CD4-positive, alpha-beta T cell (primary cell): ENCODE measurements at regions of chr15 and their contacts with region 1.

Region 1: DNA sequence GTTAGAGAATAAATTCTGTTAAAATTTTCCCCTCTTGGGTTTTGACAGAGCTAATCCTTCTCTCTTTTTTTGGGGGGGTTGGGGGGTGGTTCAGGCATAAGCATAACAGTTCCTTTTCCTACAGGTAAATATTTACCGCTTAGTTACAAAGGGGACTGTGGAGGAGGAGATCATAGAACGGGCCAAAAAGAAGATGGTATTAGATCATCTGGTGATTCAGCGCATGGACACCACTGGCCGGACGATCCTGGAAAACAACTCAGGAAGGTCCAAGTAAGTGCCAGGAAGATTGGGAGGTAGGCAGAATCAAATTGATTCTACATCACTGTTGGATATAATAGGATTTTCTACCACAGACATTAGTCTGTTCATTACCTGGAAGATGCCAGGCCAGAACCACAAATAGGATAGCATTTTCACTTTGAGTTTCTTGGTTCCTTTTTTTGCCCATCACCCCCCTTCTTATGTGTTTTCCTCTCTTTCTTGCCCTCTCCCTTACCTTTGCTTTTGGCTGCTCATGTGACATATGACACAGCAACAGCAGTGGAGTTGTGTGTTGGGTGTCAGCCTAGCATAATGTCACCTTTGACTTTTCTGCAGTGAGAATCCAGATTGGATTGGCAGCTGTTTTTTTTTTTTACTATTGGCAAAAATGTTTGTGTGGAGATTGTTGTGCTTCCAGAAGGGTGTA is 79.0 kb downstream of the CHD2 start:
- DNase-seq: no peak
- ATAC-seq: no peak
- H3K4me3 ChIP-seq: no peak overlapping the region
- H3K4me3 Mint-ChIP-seq: no peak overlapping the region
- H3K27ac ChIP-seq: no peak overlapping the region
- H3K27ac Mint-ChIP-seq: peak overlapping the region; percentile 56
- H3K4me1 ChIP-seq: no peaks in the 10 kb centered on the region
- H3K4me1 Mint-ChIP-seq: peaks cover 30% of the 10 kb centered on the region
- H3K27me3 ChIP-seq: no peaks in the 10 kb centered on the region
- H3K27me3 Mint-ChIP-seq: no peaks in the 10 kb centered on the region
- CTCF ChIP-seq: no peak

Region 2: DNA sequence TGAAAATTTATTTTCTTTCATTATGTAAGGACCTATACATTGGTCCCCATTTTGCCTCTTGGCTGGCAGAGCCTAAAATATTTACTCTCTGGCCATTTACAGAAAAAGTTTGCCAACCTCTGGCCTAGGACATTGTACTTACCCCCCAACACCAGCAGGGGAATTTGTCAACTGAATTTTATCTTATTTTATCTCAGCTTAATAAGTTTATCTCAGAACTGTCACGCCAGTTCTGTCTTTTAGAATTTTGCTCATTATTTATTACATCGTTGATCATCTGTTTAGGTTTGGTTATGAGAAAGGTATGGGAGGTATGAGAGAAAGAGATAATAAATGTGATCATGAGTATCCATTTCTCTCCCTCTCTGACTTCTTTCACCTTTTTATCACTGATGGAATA is 40.8 kb before region 1 on chr15:
- CTCF ChIA-PET with region 1: interaction called, 5 read pairs
- POLR2A ChIA-PET with region 1: interaction called, 3 read pairs
- intact Hi-C with region 1: loop called (anchors 5 kb)
- DNase-seq: no peak
- ATAC-seq: no peak
- H3K4me3 ChIP-seq: no peak overlapping the region
- H3K4me3 Mint-ChIP-seq: no peak overlapping the region
- H3K27ac ChIP-seq: no peak overlapping the region
- H3K27ac Mint-ChIP-seq: no peak overlapping the region
- H3K4me1 ChIP-seq: peaks cover 18% of the 10 kb centered on the region
- H3K4me1 Mint-ChIP-seq: peaks cover 58% of the 10 kb centered on the region
- H3K27me3 ChIP-seq: no peaks in the 10 kb centered on the region
- H3K27me3 Mint-ChIP-seq: no peaks in the 10 kb centered on the region
- CTCF ChIP-seq: no peak

Region 3: DNA sequence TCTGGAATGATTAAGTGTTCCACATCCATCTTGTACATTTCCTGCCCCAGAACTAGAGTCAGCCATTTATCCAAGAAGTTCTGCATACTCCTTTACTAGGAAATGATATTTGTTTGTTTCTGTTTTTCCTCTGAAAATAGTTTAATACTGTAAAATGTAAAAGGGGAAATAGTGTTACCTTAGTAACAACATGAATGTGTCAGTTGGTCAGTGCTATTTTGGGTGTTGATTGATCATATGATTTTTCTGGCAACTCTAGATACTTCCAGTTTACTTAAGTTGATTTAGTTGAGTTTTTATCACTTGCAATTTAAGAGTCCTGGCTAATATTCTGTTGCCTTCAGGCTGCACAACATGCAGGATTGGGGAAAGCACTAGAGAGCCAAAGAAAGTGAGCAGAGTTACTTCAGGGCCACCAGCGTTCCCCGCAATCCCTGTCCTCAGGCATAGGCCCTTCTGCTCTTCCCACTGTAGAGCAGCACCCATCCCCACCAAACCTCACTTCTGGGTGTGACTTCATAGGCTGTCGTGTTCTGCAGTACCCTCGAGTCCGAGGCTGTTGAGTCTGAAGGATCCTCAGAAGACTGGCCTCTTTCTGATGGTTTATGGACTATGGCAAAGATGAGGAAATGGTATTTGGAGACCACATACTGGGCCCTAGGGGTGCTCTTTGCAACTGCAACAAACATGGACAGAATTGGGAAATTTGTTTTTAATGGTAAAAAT is 10.1 kb before region 1 on chr15:
- CTCF ChIA-PET with region 1: interaction called, 3 read pairs
- POLR2A ChIA-PET with region 1: interaction called, 4 read pairs
- intact Hi-C with region 1: loop called in 1 of 2 experiments (anchors 1 kb)
- DNase-seq: peak in 2 of 14 experiments; percentile 23 to 26
- ATAC-seq: peak; percentile 41
- H3K4me3 ChIP-seq: no peak overlapping the region
- H3K4me3 Mint-ChIP-seq: no peak overlapping the region
- H3K27ac ChIP-seq: no peak overlapping the region
- H3K27ac Mint-ChIP-seq: peak overlapping the region; percentile 37
- H3K4me1 ChIP-seq: peaks cover 3% of the 10 kb centered on the region
- H3K4me1 Mint-ChIP-seq: peaks cover 53% of the 10 kb centered on the region
- H3K27me3 ChIP-seq: no peaks in the 10 kb centered on the region
- H3K27me3 Mint-ChIP-seq: no peaks in the 10 kb centered on the region
- CTCF ChIP-seq: no peak

Region 4: DNA sequence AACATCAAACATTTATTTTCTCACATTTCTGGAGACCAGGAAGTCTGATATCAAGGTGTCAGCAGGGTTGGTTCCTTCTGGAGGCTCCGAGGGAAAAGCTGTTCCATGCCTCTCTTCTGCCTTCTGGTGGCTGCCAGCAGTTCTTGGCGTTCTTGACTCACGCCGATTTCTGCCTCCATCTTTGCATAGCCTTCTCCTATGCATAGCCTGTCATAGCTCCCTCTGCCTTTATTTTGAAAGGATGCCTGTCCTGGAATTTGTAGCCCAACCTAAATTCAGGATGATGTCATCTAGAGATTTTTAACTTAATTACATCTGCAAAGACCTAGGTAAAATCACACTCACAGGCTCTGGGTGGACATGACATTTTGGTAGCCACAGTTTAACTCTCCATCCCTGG is 39.4 kb after region 1 on chr15:
- CTCF ChIA-PET with region 1: interaction called, 4 read pairs
- POLR2A ChIA-PET with region 1: interaction called, 3 read pairs
- intact Hi-C with region 1: loop called in 1 of 2 experiments (anchors 5 kb)
- DNase-seq: no peak
- ATAC-seq: no peak
- H3K4me3 ChIP-seq: no peak overlapping the region
- H3K4me3 Mint-ChIP-seq: no peak overlapping the region
- H3K27ac ChIP-seq: no peak overlapping the region
- H3K27ac Mint-ChIP-seq: peak overlapping the region; percentile 64
- H3K4me1 ChIP-seq: peaks cover 3% of the 10 kb centered on the region
- H3K4me1 Mint-ChIP-seq: peaks cover 59% of the 10 kb centered on the region
- H3K27me3 ChIP-seq: no peaks in the 10 kb centered on the region
- H3K27me3 Mint-ChIP-seq: no peaks in the 10 kb centered on the region
- CTCF ChIP-seq: no peak

Region 5: GRCh38 chr15:93052090-93052879 is 73.1 kb after region 1 on chr15:
- CTCF ChIA-PET with region 1: no interaction called
- POLR2A ChIA-PET with region 1: no interaction called
- intact Hi-C with region 1: no loop called
- DNase-seq: peak in 2 of 14 experiments; percentile 27 to 30
- ATAC-seq: no peak
- H3K4me3 ChIP-seq: no peak overlapping the region
- H3K4me3 Mint-ChIP-seq: no peak overlapping the region
- H3K27ac ChIP-seq: no peak overlapping the region
- H3K27ac Mint-ChIP-seq: no peak overlapping the region
- H3K4me1 ChIP-seq: peaks cover 21% of the 10 kb centered on the region
- H3K4me1 Mint-ChIP-seq: peaks cover 19% of the 10 kb centered on the region
- H3K27me3 ChIP-seq: no peaks in the 10 kb centered on the region
- H3K27me3 Mint-ChIP-seq: no peaks in the 10 kb centered on the region
- CTCF ChIP-seq: peak; percentile 15